HepG2 (cell line): ENCODE measurements at regions of chr15 and their contacts with region 1.

Region 1: GRCh38 chr15:69475769-69476358 is 23.2 kb downstream of the RPLP1 start:
- DNase-seq: peak; percentile 33
- ATAC-seq: peak; percentile 78
- H3K4me3 ChIP-seq: no peak overlapping the region
- H3K27ac ChIP-seq: no peak overlapping the region
- H3K4me1 ChIP-seq: no peaks in the 10 kb centered on the region
- H3K27me3 ChIP-seq: peaks cover 1 to 40% of the 10 kb centered on the region in 2 experiments
- CTCF ChIP-seq: peak; percentile 88
- EP300 ChIP-seq: no peak
- POLR2A ChIP-seq: no peak
- RAD21 ChIP-seq: peak; percentile 73

Region 2: DNA sequence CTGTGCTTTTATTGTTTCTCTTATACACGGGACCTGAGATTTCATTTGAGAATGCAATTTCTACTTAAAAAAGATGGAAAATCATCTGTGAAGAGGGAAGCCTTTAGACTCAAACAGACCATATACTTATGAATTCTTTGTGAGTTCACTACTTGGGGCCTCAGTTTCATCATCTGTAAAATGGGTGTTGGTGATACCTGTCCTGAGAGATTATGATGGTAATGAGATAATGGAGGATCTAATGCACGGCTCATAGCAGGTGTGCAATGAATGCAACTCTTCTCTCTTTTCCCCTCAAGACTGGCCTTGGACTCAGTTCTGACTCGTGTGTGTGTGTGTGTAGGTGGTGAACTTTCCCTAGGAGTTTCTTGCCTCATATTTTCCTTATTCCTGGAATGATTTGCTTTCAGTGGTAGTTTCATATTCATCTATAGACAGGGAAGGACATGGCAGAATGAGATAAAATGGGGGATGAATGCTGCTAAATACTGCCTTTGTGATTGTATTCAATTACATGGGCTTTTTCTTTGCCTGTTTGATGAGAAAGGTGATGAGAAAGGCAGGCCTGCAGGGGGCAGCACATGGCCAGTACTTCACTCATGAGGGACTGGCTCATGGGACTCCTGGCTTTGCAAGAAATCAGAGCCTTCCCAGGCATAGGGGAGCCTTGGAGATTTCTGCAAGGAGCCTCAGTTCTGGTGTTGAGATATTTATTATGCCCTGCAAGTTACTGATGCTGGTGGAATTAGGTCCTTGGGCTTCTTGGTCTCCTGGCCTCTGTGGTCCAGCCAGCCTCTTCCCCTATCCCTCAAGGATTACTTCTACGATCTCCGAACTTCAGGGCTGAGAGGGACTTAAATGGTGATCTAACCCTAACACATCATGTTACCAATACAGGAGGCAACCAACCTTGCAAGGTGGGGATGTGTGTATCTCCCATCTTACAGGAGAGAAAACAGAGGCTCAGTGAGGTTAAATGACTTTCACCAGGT is 47.4 kb after region 1 on chr15:
- CTCF ChIA-PET with region 1: no interaction called
- POLR2A ChIA-PET with region 1: no interaction called
- in situ Hi-C with region 1: no loop called
- intact Hi-C with region 1: no loop called
- DNase-seq: peak; percentile 38
- ATAC-seq: peak; percentile 70
- H3K4me3 ChIP-seq: no peak overlapping the region
- H3K27ac ChIP-seq: no peak overlapping the region
- H3K4me1 ChIP-seq: no peaks in the 10 kb centered on the region
- H3K27me3 ChIP-seq: peaks cover 9 to 64% of the 10 kb centered on the region in 2 experiments
- CTCF ChIP-seq: peak; percentile 74
- EP300 ChIP-seq: no peak
- POLR2A ChIP-seq: no peak
- RAD21 ChIP-seq: no peak

Region 3: GRCh38 chr15:69557340-69558137 is 81.7 kb after region 1 on chr15:
- CTCF ChIA-PET with region 1: no interaction called
- POLR2A ChIA-PET with region 1: no interaction called
- in situ Hi-C with region 1: no loop called
- intact Hi-C with region 1: no loop called
- DNase-seq: peak; percentile 82
- ATAC-seq: peak; percentile 75
- H3K4me3 ChIP-seq: peak overlapping the region in 1 of 3 experiments; percentile 4; a peak in 1 of 6 replicates
- H3K27ac ChIP-seq: no peak overlapping the region
- H3K4me1 ChIP-seq: peaks cover 51% of the 10 kb centered on the region
- H3K27me3 ChIP-seq: peaks cover 1 to 91% of the 10 kb centered on the region in 2 experiments; a peak in 4 of 5 replicates
- CTCF ChIP-seq: no peak
- EP300 ChIP-seq: peak in 1 of 2 experiments; percentile 19; a peak in 1 of 4 replicates
- POLR2A ChIP-seq: no peak
- RAD21 ChIP-seq: no peak

Region 4: GRCh38 chr15:70355275-70355795 is 879.5 kb after region 1 on chr15:
- CTCF ChIA-PET with region 1: no interaction called
- POLR2A ChIA-PET with region 1: no interaction called
- in situ Hi-C with region 1: loop called (anchors 10 kb)
- intact Hi-C with region 1: no loop called
- DNase-seq: no peak
- ATAC-seq: peak; percentile 76
- H3K4me3 ChIP-seq: no peak overlapping the region
- H3K27ac ChIP-seq: no peak overlapping the region
- H3K4me1 ChIP-seq: no peaks in the 10 kb centered on the region
- H3K27me3 ChIP-seq: peaks cover 1 to 8% of the 10 kb centered on the region in 2 experiments; a peak in 4 of 5 replicates
- CTCF ChIP-seq: no peak
- EP300 ChIP-seq: no peak
- POLR2A ChIP-seq: no peak
- RAD21 ChIP-seq: no peak

Region 5: GRCh38 chr15:70461992-70462391 is 986.1 kb after region 1 on chr15:
- CTCF ChIA-PET with region 1: interaction called, 7 read pairs
- POLR2A ChIA-PET with region 1: no interaction called
- in situ Hi-C with region 1: no loop called
- intact Hi-C with region 1: loop called (anchors 2 kb)
- DNase-seq: no peak
- ATAC-seq: no peak
- H3K4me3 ChIP-seq: no peak overlapping the region
- H3K27ac ChIP-seq: no peak overlapping the region
- H3K4me1 ChIP-seq: no peaks in the 10 kb centered on the region
- H3K27me3 ChIP-seq: no peaks in the 10 kb centered on the region; a peak in 1 of 5 replicates
- CTCF ChIP-seq: no peak
- EP300 ChIP-seq: no peak
- POLR2A ChIP-seq: no peak
- RAD21 ChIP-seq: no peak

Region 6: GRCh38 chr15:70488002-70488605 is 1012.2 kb after region 1 on chr15:
- CTCF ChIA-PET with region 1: interaction called, 8 read pairs
- POLR2A ChIA-PET with region 1: no interaction called
- in situ Hi-C with region 1: loop called (anchors 5 kb)
- intact Hi-C with region 1: loop called (anchors 1 kb)
- DNase-seq: peak; percentile 29
- ATAC-seq: peak; percentile 66
- H3K4me3 ChIP-seq: no peak overlapping the region
- H3K27ac ChIP-seq: no peak overlapping the region
- H3K4me1 ChIP-seq: no peaks in the 10 kb centered on the region
- H3K27me3 ChIP-seq: peaks cover 0 to 20% of the 10 kb centered on the region in 2 experiments; a peak in 3 of 5 replicates
- CTCF ChIP-seq: peak; percentile 88
- EP300 ChIP-seq: no peak
- POLR2A ChIP-seq: no peak
- RAD21 ChIP-seq: peak; percentile 52